ENCODE measurements at regions of chr1 and their contacts with region 1.

Region 1: GRCh38 chr1:214551436-214552173 is at the start of gene PTPN14:
- DNase-seq: peak; percentile 67
- H3K4me3 ChIP-seq: peak within 1 kb of the TSS; percentile 86
- CTCF ChIP-seq: peak; percentile 55

Region 2: DNA sequence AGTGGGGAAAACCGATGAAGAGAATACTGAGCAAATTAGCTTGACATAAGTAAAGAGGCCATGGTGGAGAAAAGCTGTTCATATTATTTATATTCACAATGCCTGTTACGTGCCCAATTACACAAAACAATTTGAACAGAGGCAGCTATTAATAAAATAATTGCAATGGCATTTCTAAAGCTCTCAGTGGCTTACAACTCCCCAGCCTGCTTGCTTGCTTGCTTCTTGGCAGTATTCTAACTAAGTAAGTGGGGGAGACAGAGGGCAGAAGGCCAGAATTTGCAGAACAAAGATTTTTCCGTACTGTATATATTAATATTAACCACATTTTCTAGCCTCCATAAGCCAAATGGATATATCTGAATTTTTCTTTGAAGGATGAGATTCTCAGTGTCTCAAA is 13.1 kb before region 1 on chr1:
- CTCF ChIA-PET with region 1: interaction called, 21 read pairs
- POLR2A ChIA-PET with region 1: interaction called, 7 read pairs
- DNase-seq: no peak
- H3K4me3 ChIP-seq: no peak overlapping the region
- CTCF ChIP-seq: no peak